ENCODE measurements at regions of chr11 and their contacts with region 1.

Region 1: GRCh38 chr11:95521133-95521542 is 268.4 kb downstream of the FAM76B start:
- DNase-seq: peak; percentile 89
- H3K4me3 Mint-ChIP-seq: no peak overlapping the region
- H3K27ac Mint-ChIP-seq: peak overlapping the region; percentile 50
- H3K4me1 Mint-ChIP-seq: peaks cover 32% of the 10 kb centered on the region
- H3K27me3 Mint-ChIP-seq: no peaks in the 10 kb centered on the region
- CTCF ChIP-seq: no peak

Region 2: DNA sequence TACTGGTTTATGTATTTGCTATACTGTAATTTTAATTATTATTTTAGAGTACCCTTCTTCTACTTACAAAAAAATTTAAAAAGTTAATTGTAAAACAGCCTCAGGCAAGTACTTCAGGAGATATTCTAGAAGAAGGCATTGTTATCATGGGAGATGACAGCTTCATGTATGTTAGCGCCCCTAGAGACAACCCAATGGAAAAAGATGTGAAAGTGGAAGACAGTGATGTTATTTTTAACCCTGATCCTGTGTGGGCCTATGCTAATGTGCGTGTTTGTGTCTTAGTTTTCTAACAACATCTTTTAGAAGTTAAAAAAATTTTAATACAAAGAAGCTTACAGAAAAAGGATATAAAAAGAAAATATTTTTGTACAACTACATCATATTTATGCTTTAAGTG is 63.5 kb after region 1 on chr11:
- CTCF ChIA-PET with region 1: interaction called, 3 read pairs
- POLR2A ChIA-PET with region 1: no interaction called
- intact Hi-C with region 1: loop called (anchors 5 kb)
- DNase-seq: no peak
- H3K4me3 Mint-ChIP-seq: no peak overlapping the region
- H3K27ac Mint-ChIP-seq: peak overlapping the region; percentile 50
- H3K4me1 Mint-ChIP-seq: peaks cover 11% of the 10 kb centered on the region
- H3K27me3 Mint-ChIP-seq: no peaks in the 10 kb centered on the region
- CTCF ChIP-seq: no peak

Region 3: DNA sequence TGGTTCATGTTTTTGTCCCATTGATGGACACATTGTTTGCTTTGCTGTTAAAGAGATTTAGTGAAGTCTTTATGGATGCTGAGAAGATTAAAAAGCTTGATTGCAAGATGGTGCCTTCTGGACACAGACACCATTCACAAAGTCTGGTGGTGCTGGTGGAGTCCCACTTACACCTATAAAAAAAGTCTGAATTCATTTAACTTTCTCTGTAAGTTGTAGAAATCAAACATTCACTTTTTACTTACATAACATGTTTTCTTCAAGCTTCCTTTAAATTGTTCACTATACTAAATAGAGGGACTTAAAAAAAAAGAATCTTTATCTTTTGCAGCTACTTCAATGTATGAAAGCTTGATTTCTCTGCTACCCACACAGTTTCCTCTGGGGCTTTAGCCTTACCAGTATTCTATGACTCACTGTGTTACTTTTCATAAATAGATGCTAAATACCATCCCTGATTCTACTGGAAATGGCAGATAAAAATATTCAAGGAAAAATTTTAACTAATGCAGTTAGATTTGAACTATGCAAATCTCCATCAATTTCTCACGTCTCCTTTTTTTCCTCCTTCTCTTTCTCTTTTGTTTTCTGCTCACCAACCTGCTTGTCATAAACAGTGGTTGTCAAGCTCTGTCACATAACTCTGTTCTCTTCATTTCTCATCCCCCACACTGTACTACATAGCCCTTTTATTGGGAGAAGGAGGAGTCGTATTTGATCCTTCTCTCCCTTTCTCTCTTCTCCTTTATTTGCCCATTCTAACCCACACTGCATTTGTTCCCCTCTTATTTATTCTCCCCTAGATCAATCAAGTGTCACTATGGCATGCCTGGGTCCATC is 178.7 kb after region 1 on chr11:
- CTCF ChIA-PET with region 1: interaction called, 10 read pairs
- POLR2A ChIA-PET with region 1: interaction called, 6 read pairs
- intact Hi-C with region 1: loop called (anchors 5 kb)
- DNase-seq: no peak
- H3K4me3 Mint-ChIP-seq: no peak overlapping the region
- H3K27ac Mint-ChIP-seq: no peak overlapping the region
- H3K4me1 Mint-ChIP-seq: peaks cover 13% of the 10 kb centered on the region
- H3K27me3 Mint-ChIP-seq: no peaks in the 10 kb centered on the region
- CTCF ChIP-seq: no peak

Measured in MCF 10A (cell line).